Transverse colon (tissue), 4 donors: ENCODE measurements at regions of chr20 and their contacts with region 1.

Region 1: DNA sequence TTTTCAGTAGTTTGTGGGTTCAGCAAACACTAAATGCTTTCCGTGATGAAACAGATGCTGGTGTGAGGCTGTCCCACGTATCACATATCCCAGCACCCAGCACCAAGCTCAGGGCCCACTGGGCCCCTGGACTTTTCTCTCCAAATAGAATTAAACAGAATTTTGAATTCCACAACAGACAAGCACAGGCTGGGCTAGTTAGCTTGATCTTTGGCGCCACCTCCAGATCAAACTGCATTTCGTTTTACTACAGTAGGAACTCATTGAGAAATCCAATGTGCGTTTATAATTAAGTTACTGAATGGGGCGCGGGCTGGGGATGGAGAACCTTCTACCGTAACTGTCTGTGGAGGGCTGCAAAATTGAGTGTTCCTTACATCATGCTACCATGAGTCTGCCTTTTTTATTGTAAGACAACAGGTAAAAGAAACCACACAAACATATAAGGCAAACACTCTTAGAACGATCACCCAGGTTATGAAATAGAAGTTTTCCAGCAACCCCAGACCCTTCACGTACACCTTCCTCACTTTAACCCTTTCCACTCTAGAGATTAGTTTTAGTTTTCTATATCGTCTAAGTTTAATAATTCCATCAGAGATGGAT is 107.8 kb downstream of the ZFP64 start:
- DNase-seq: peak; percentile 54
- H3K4me3 ChIP-seq: no peak overlapping the region
- H3K27ac ChIP-seq: no peak overlapping the region
- H3K4me1 ChIP-seq: no peaks in the 10 kb centered on the region
- H3K27me3 ChIP-seq: no peaks in the 10 kb centered on the region
- CTCF ChIP-seq: peak in 4 of 5 experiments; percentile 39 to 45 (median 42)
- EP300 ChIP-seq: no peak
- POLR2A ChIP-seq: no peak

Region 2: GRCh38 chr20:51639206-51639832 is 444.4 kb before region 1 on chr20:
- in situ Hi-C with region 1: loop called in 3 of 4 experiments (anchors 25 kb)
- intact Hi-C with region 1: loop called (anchors 2 kb)
- DNase-seq: peak; percentile 66
- H3K4me3 ChIP-seq: no peak overlapping the region
- H3K27ac ChIP-seq: no peak overlapping the region
- H3K4me1 ChIP-seq: no peaks in the 10 kb centered on the region
- H3K27me3 ChIP-seq: no peaks in the 10 kb centered on the region
- CTCF ChIP-seq: peak; percentile 65 to 81 (median 78)
- EP300 ChIP-seq: no peak
- POLR2A ChIP-seq: no peak

Region 3: DNA sequence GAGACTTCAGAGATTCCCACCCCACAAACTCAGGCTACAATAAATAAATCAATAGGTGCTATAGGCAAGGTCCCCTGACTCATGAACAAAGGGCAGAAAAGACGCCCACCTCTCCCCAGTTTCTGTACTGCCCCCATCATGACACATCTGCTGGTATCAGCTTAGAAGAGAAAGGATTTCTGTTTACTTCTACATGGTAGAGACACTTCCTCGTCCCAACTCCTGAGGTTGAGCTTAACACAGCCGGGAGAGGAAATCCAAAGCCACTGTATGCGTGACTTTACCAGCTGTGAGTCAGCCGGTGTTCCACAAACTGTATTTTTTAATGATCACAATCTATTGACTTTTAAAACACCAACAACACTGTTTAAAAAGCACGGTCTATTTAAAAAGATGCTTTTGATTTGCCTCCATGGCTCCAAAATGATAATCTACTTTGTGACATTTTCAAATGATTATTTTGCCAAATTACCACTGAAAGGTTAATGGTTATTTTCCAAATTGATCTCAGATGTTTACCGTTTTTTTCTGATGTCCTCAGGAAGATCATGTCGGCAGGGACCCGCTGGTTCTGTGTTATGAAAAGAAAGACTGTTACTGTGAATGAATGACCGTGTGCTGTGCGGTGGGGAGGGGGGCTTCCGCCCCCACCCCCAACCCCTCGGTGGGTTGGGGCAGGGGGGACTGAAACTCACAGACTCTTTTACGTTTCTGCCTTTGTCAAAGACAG is 388.0 kb before region 1 on chr20:
- in situ Hi-C with region 1: loop called in 1 of 4 experiments (anchors 25 kb)
- intact Hi-C with region 1: no loop called
- DNase-seq: no peak
- H3K4me3 ChIP-seq: no peak overlapping the region
- H3K27ac ChIP-seq: peak overlapping the region in 2 of 4 donors; percentile 11 to 34
- H3K4me1 ChIP-seq: peaks cover 0 to 11% (median 0%) of the 10 kb centered on the region in 4 donors
- H3K27me3 ChIP-seq: no peaks in the 10 kb centered on the region
- CTCF ChIP-seq: no peak
- EP300 ChIP-seq: no peak
- POLR2A ChIP-seq: no peak

Region 4: GRCh38 chr20:52349806-52350205 is 266.1 kb after region 1 on chr20:
- in situ Hi-C with region 1: no loop called
- intact Hi-C with region 1: no loop called
- DNase-seq: no peak
- H3K4me3 ChIP-seq: no peak overlapping the region
- H3K27ac ChIP-seq: no peak overlapping the region
- H3K4me1 ChIP-seq: no peaks in the 10 kb centered on the region
- H3K27me3 ChIP-seq: no peaks in the 10 kb centered on the region
- CTCF ChIP-seq: no peak
- EP300 ChIP-seq: no peak
- POLR2A ChIP-seq: no peak